Mammary epithelial cell (primary cell): ENCODE measurements at regions of chr2 and their contacts with region 1.

Region 1: DNA sequence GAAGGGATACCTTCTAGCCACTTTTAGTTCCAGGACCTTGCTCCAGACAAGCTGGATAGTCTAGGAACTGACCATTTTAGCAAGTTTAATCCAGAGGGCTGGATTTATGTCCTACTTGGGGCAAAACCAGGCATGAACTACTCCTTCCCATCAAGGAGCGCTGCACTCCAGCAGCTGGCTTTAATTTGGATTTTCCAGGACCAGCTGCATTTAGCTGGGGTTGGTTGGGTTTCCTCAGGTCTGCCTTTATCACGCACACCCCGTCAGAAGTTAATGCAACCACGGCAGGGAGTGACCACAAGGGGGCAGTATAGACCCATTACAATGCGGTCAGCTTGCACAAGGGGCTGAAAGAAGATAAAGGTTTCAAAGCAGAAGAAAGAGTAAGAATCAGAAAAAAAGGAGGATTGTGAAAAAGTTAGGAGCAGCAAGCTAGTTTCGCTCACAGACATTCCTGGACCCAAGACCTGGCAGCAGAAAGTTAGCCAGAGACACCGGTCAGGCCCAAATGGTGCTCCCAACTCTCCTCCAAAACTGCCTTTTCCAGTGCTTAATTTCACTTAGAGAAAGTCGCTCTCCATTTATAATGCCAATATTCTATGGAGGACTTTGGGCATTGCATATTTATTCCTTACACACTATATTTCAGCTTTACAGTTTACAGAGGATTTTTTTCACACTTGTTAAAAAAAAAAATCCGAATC is 40.1 kb downstream of the SLC4A1AP start:
- DNase-seq: peak; percentile 80
- H3K4me3 ChIP-seq: no peak overlapping the region
- H3K27ac ChIP-seq: no peak overlapping the region
- H3K4me1 ChIP-seq: peaks cover 40% of the 10 kb centered on the region
- H3K27me3 ChIP-seq: no peaks in the 10 kb centered on the region
- CTCF ChIP-seq: peak; percentile 91 to 93

Region 2: DNA sequence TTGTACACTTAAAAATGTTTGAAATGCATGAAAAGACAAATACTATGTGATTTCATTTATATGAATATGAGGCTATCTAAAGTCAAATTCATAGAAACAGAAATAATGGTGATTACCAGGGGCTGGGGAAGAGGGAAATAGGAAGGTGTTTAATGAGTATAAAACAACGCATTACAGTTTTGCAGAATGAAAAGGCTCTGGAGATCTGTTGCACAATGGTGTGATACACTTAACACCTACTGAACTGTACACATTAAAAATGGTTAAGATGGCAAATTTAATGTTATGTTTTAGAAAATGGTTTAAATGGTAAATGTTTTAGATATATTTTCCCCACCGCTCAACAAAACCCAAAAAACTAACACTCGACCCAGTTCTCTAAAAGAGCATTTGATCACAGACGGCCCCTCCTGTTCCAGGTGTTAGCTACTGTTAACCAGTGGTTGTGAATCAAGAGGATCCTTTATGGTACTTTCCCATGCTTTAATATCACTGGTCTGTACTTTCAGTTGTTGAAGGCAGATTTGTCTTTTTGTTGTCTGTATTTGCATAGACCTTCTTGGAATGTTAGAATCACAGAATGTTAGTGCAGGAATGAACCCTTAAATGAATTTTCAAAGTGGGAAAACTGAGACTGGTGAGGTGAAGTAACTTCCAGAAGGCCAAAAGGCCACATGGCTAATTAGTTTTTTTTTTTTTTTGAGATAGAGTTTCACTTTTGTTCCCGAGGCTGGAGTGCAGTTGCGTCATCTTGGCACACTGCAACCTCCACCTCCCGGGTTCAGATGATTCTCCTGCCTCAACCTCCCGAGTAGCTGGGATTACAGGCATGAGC is 1659.7 kb before region 1 on chr2:
- CTCF ChIA-PET with region 1: no interaction called
- dilution Hi-C with region 1: no loop called
- in situ Hi-C with region 1: no loop called
- intact Hi-C with region 1: no loop called
- DNase-seq: peak; percentile 59
- H3K4me3 ChIP-seq: peak overlapping the region in 2 of 3 experiments; percentile 27 to 28
- H3K27ac ChIP-seq: peak overlapping the region; percentile 67
- H3K4me1 ChIP-seq: peaks cover 12% of the 10 kb centered on the region
- H3K27me3 ChIP-seq: no peaks in the 10 kb centered on the region
- CTCF ChIP-seq: no peak

Region 3: GRCh38 chr2:27723372-27724144 is 19.8 kb after region 1 on chr2:
- CTCF ChIA-PET with region 1: interaction called, 9 read pairs
- dilution Hi-C with region 1: no loop called
- in situ Hi-C with region 1: no loop called
- intact Hi-C with region 1: loop called (anchors 1 kb)
- DNase-seq: peak; percentile 53
- H3K4me3 ChIP-seq: no peak overlapping the region
- H3K27ac ChIP-seq: no peak overlapping the region
- H3K4me1 ChIP-seq: peaks cover 32% of the 10 kb centered on the region
- H3K27me3 ChIP-seq: no peaks in the 10 kb centered on the region
- CTCF ChIP-seq: peak; percentile 78 to 89

Region 4: GRCh38 chr2:27746325-27746724 is 42.5 kb after region 1 on chr2:
- CTCF ChIA-PET with region 1: no interaction called
- dilution Hi-C with region 1: no loop called
- in situ Hi-C with region 1: no loop called
- intact Hi-C with region 1: no loop called
- DNase-seq: no peak
- H3K4me3 ChIP-seq: no peak overlapping the region
- H3K27ac ChIP-seq: no peak overlapping the region
- H3K4me1 ChIP-seq: no peaks in the 10 kb centered on the region
- H3K27me3 ChIP-seq: no peaks in the 10 kb centered on the region
- CTCF ChIP-seq: no peak

Region 5: DNA sequence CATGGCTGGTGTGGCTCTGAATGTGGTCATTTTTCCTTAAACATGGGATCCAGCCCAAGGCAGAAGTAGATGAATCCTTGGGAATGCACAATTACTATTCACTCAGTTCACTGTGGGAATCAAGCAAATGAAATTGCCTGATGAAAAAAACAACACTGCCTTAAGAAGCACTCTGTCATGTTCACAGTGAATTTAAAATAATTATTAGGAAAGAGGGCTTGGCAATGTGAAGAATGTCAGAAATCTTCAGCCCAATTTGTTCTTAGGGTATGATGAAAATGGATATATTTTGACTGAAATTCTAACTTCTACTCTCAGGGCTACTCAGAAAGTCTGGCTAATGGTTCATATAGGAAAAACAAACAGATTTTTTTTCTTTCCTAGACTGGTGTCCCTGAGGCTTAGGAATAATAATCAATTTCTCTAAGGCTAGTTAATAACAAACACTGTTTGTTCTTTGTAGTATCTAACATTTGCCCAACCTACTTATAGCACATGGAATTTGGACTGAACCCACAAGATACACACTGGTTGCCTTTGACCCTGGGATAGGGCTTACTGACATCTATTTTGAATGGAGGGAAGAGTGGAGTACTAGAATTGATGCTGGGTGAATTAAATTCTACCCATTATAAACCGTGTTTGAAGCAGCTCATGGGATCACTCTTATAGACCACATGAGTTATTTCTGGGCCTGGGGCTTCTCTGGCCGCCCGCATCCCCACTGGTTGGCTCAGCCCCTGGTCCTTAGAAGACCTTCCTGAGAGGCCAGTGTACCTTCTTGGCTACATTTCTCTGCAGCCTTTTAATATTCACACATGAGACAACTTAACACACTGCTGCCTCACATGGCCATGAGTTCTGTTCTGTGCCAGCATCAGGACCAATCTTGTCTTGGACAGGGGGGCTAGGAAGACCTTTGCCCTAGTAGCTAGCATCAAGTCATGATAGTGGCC is 59.4 kb after region 1 on chr2:
- CTCF ChIA-PET with region 1: no interaction called
- dilution Hi-C with region 1: no loop called
- in situ Hi-C with region 1: no loop called
- intact Hi-C with region 1: no loop called
- DNase-seq: no peak
- H3K4me3 ChIP-seq: no peak overlapping the region
- H3K27ac ChIP-seq: no peak overlapping the region
- H3K4me1 ChIP-seq: peaks cover 37% of the 10 kb centered on the region
- H3K27me3 ChIP-seq: no peaks in the 10 kb centered on the region
- CTCF ChIP-seq: no peak

Region 6: DNA sequence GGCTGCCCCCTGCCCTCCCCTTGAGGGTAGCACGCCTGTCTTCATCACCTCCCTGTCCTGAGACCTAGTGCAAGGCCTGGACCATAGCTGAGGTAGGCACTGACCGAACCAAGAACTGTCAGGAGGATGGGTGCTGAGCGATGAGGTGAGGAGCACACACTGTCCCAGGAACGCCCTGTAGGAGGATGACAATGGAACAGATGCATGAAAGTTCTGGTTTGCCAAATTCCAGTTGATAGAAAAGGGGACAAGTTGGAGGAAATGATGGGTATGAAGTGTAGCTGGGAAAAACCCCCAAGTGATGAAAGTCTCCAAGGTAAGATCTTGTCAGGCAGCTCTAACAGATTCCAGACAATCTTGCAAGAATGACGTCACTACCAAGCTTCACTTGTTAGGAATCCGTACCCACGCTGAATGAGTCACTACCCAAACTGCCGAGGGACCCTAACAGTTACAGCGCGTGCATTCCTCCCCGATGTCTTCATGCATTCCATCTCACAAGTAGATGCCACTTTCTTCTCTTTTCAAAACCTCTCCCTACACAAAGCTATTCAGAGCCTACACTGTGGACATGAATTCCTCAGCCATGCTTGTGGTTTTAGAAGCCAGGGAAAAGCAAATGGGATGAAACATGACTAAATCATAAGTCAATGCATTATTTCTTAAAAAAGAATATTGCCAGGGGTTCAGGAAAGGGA is 95.3 kb after region 1 on chr2:
- CTCF ChIA-PET with region 1: interaction called, 9 read pairs
- dilution Hi-C with region 1: no loop called
- in situ Hi-C with region 1: no loop called
- intact Hi-C with region 1: loop called (anchors 2 kb)
- DNase-seq: peak; percentile 100
- H3K4me3 ChIP-seq: no peak overlapping the region
- H3K27ac ChIP-seq: peak overlapping the region; percentile 94
- H3K4me1 ChIP-seq: peaks cover 30% of the 10 kb centered on the region
- H3K27me3 ChIP-seq: no peaks in the 10 kb centered on the region
- CTCF ChIP-seq: no peak

Region 7: GRCh38 chr2:27954771-27955383 is 251.1 kb after region 1 on chr2:
- CTCF ChIA-PET with region 1: no interaction called
- dilution Hi-C with region 1: no loop called
- in situ Hi-C with region 1: no loop called
- intact Hi-C with region 1: loop called (anchors 2 kb)
- DNase-seq: peak; percentile 92
- H3K4me3 ChIP-seq: peak overlapping the region in 1 of 3 experiments; percentile 4
- H3K27ac ChIP-seq: peak overlapping the region; percentile 84
- H3K4me1 ChIP-seq: peaks cover 66% of the 10 kb centered on the region
- H3K27me3 ChIP-seq: no peaks in the 10 kb centered on the region
- CTCF ChIP-seq: peak; percentile 3 to 33

Region 8: DNA sequence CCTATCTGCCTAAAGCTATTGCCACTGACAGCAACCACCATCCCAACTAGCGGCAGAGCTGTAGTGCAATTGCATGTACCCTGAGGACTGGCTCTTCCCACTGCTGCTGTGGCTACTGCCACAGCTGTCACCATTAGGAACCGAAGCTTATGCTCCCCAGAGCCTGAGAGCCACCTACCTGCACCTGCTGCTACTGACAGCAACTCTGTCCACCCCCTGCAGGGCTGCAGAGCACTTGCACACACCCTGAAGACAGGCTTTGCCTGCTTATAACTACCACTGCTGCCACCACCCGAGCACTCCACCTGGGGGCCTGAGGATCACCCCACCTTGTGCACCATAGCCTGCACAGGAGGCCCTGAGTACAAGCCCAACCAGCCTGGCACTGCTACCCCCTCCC is 471.2 kb after region 1 on chr2:
- CTCF ChIA-PET with region 1: no interaction called
- dilution Hi-C with region 1: no loop called
- in situ Hi-C with region 1: no loop called
- intact Hi-C with region 1: loop called (anchors 10 kb)
- DNase-seq: no peak
- H3K4me3 ChIP-seq: no peak overlapping the region
- H3K27ac ChIP-seq: no peak overlapping the region
- H3K4me1 ChIP-seq: peaks cover 25% of the 10 kb centered on the region
- H3K27me3 ChIP-seq: no peaks in the 10 kb centered on the region
- CTCF ChIP-seq: peak; percentile 19 to 28

Region 9: GRCh38 chr2:28452534-28453081 is 748.8 kb after region 1 on chr2:
- CTCF ChIA-PET with region 1: interaction called, 4 read pairs
- dilution Hi-C with region 1: no loop called
- in situ Hi-C with region 1: no loop called
- intact Hi-C with region 1: loop called (anchors 1 kb)
- DNase-seq: no peak
- H3K4me3 ChIP-seq: no peak overlapping the region
- H3K27ac ChIP-seq: no peak overlapping the region
- H3K4me1 ChIP-seq: peaks cover 52% of the 10 kb centered on the region
- H3K27me3 ChIP-seq: no peaks in the 10 kb centered on the region
- CTCF ChIP-seq: peak; percentile 98 to 99

Region 10: DNA sequence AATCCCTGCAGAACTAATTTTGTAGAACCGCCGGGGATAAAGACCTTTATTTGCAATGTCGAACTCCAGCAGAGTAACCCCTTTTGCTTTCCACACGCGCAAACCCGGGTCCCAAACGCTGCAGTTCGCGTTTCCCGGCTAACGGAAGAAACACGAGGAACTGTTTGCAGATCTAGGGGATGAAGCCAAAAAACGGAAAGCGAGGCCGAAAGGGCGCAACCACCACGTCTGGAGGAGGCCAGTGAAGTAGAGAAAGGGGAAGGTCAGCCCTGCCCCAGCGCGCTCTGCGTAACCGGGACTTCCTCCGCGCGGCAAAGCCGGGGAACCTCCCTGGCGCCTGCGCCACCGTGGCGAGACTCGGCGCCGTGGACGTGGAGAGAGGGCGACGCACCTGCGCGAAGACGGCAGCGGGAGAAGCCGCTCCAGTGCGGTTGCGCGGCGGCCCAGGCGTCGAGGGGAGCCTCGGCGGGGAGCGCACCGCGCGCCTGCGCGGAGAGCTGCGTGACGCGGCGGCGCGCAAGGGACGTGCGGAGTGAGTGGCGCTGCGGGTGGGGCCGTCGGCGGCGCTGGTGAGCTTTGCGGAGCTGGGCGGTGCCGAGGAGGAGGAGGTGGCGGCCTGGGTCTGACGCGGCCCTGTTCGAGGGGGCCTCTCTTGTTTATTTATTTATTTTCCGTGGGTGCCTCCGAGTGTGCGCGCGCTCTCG is 1047.6 kb after region 1 on chr2 and contains the start of gene PPP1CB:
- CTCF ChIA-PET with region 1: no interaction called
- dilution Hi-C with region 1: no loop called
- in situ Hi-C with region 1: no loop called
- intact Hi-C with region 1: loop called (anchors 10 kb)
- DNase-seq: peak; percentile 97
- H3K4me3 ChIP-seq: peak within 1 kb of the TSS; percentile 93 to 97 (median 93)
- H3K27ac ChIP-seq: peak within 1 kb of the TSS; percentile 93
- H3K4me1 ChIP-seq: peaks cover 30% of the 10 kb centered on the region
- H3K27me3 ChIP-seq: no peaks in the 10 kb centered on the region
- CTCF ChIP-seq: peak in 1 of 2 donors; percentile 45
- total RNA-seq, gene PPP1CB: 266 to 282 TPM